Calu3 (cell line): ENCODE measurements at regions of chr15 and their contacts with region 1.

Region 1: DNA sequence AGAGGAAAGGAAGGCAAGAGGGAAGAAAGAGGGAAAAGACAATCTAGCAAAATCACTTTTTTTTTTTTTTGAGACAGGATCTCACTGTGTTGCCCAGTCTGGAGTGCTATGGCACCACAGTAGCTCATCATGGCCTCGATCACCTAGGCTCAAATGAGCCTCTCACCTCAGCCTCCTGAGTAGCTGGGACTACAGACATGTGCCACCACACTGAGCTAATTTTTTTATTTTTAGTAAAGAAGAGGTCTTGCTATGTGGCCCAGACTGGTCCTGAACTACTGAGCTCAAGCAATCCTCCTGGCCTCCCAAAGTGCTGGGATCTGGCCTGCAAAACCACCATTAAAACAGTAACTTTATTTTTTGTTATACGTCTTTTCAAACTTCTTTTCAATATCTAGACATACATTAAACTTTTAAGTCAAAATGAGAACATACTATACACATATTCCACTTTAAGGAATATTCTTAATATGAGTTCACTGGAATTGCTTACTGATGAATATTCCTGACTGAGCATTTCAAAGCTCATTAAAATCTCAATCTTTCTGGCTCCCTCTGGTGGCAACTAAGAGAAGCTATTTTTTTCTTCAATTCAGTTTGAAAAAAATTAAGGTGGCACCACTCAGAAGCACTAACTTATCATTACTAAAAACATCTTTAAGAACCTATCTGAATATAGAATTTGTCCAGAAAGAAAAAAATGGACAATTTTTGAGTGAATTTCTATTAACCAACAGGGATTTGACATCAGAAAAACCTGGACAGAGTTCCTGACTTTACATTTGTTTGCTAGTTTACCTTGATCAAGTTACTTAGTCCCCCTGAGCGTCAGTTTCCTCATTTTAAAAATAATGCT is 40.9 kb downstream of the UACA start:
- DNase-seq: no peak
- H3K4me3 Mint-ChIP-seq: no peak overlapping the region
- H3K27ac Mint-ChIP-seq: no peak overlapping the region
- H3K4me1 Mint-ChIP-seq: peaks cover 8% of the 10 kb centered on the region
- H3K27me3 Mint-ChIP-seq: no peaks in the 10 kb centered on the region
- CTCF ChIP-seq: peak; percentile 61

Region 2: DNA sequence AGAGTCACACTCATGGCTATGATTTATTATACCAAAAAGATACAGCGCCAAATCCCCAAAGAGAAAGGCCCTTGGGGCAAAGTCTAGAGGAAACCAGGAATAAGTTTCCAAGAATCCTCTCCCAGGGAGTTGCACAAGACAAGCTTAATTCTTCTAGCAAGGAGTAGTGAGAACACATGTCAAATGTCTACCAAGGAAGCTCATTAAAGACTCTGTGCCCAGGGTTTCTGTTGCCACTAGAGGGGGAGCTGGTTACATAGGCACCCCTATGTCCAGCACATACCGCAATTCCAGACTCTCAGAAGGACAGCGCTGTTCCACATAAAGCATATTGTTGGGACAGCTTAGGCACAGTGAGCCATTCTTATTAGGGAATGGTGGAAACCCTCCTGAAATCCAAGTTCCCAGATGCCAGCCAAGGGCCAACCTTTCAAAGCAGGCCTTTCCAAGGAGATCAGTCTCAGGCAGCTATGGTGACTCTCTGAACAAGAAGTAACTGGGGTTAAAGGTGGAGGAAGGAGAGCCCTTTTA is 153.3 kb before region 1 on chr15:
- CTCF ChIA-PET with region 1: interaction called, 24 read pairs
- intact Hi-C with region 1: loop called (anchors 10 kb)
- DNase-seq: peak; percentile 61
- H3K4me3 Mint-ChIP-seq: no peak overlapping the region
- H3K27ac Mint-ChIP-seq: no peak overlapping the region
- H3K4me1 Mint-ChIP-seq: peaks cover 14% of the 10 kb centered on the region
- H3K27me3 Mint-ChIP-seq: peaks cover 7% of the 10 kb centered on the region
- CTCF ChIP-seq: peak; percentile 63

Region 3: GRCh38 chr15:70679919-70680231 is 42.6 kb before region 1 on chr15:
- CTCF ChIA-PET with region 1: interaction called, 33 read pairs
- intact Hi-C with region 1: loop called (anchors 1 kb)
- DNase-seq: no peak
- H3K4me3 Mint-ChIP-seq: no peak overlapping the region
- H3K27ac Mint-ChIP-seq: no peak overlapping the region
- H3K4me1 Mint-ChIP-seq: peaks cover 8% of the 10 kb centered on the region
- H3K27me3 Mint-ChIP-seq: no peaks in the 10 kb centered on the region
- CTCF ChIP-seq: no peak

Region 4: GRCh38 chr15:70701891-70702568 is 20.5 kb before region 1 on chr15:
- CTCF ChIA-PET with region 1: interaction called, 28 read pairs
- intact Hi-C with region 1: no loop called
- DNase-seq: no peak
- H3K4me3 Mint-ChIP-seq: peak overlapping the region; percentile 72
- H3K27ac Mint-ChIP-seq: peak overlapping the region; percentile 66
- H3K4me1 Mint-ChIP-seq: peaks cover 61% of the 10 kb centered on the region
- H3K27me3 Mint-ChIP-seq: no peaks in the 10 kb centered on the region
- CTCF ChIP-seq: no peak